Activated CD4-positive, alpha-beta memory T cell treated with anti-CD3 and anti-CD28 coated beads for 36 hours (primary cell): ENCODE measurements at regions of chr2 and their contacts with region 1.

Region 1: GRCh38 chr2:36858551-36859365 is 107.6 kb downstream of the STRN start:
- DNase-seq: no peak
- H3K4me3 Mint-ChIP-seq: no peak overlapping the region
- H3K27ac Mint-ChIP-seq: peak overlapping the region; percentile 39
- H3K4me1 Mint-ChIP-seq: peaks cover 19% of the 10 kb centered on the region
- H3K27me3 Mint-ChIP-seq: no peaks in the 10 kb centered on the region

Region 2: DNA sequence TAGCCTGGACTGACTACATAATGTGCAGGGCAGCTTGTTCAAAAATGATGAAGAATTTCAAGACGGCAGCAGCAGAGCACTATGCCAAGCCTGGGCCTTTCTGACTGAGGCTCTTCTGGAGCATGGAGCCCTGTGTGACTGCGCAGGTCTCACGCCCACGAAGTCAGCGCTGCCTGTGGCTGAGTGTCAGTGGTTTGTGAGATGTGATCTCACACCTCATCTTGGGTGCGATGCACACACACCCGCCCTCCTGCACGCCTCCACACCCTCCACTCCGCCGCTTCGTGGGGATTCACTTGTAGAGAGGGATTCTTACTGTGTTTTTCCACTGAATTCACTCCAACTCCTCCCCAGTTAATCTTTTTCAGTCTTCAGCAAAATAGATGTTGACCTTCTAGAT is 58.4 kb before region 1 on chr2:
- CTCF ChIA-PET with region 1: no interaction called
- POLR2A ChIA-PET with region 1: no interaction called
- intact Hi-C with region 1: loop called (anchors 2 kb)
- DNase-seq: peak; percentile 87
- H3K4me3 Mint-ChIP-seq: peak overlapping the region; percentile 9
- H3K27ac Mint-ChIP-seq: peak overlapping the region; percentile 53
- H3K4me1 Mint-ChIP-seq: peaks cover 11% of the 10 kb centered on the region
- H3K27me3 Mint-ChIP-seq: peaks cover 33% of the 10 kb centered on the region

Region 3: DNA sequence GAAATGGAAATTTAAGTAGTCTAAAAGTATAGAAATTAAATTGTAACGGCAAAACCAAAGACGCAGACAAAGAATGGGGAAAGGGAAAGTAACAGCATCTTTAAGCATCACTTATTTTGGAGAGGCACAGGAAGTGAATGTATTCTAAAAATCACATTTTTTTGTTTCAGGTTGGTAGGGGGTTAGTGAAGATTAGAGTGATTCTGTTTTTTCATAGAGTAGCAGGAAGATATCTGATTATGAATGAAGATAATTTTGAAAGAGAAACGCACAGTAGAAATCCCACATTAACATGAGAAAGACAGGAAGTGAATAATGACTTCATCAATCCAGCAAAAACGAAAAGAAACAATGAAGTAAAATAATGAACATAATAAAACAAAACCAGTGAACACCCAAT is 23.6 kb before region 1 on chr2:
- CTCF ChIA-PET with region 1: no interaction called
- POLR2A ChIA-PET with region 1: no interaction called
- intact Hi-C with region 1: loop called (anchors 2 kb)
- DNase-seq: no peak
- H3K4me3 Mint-ChIP-seq: no peak overlapping the region
- H3K27ac Mint-ChIP-seq: peak overlapping the region; percentile 3
- H3K4me1 Mint-ChIP-seq: peaks cover 11% of the 10 kb centered on the region
- H3K27me3 Mint-ChIP-seq: peaks cover 15% of the 10 kb centered on the region

Region 4: DNA sequence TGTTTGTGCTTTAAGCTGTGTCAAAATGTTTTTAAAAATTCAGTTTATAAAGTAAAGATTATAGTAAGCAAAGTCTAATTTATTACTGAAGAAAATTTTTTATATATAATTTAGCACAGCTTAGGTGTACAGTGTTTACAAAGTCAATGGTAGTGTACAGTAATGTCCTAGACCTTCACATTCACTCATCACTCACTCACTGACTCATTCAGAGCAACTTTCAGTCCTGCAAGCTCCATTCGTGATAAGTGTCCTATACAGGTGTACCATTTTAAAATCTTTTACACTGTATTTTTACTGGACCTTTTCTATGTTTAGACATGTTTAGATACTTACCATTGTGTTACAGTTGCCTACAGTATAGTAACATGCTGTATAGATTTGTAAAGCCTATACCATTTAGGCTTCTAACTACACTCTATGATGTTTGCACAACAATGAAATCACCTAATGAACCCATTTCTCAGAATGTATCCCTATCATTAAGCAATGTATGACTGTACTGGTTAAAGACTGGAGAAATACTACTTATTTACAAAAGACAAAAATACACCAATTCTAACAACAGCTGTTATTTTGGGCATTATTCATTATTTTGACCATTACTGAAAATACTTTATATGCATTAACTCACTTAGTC is 12.4 kb after region 1 on chr2:
- CTCF ChIA-PET with region 1: no interaction called
- POLR2A ChIA-PET with region 1: no interaction called
- intact Hi-C with region 1: loop called (anchors 1 kb)
- DNase-seq: no peak
- H3K4me3 Mint-ChIP-seq: no peak overlapping the region
- H3K27ac Mint-ChIP-seq: no peak overlapping the region
- H3K4me1 Mint-ChIP-seq: peaks cover 4% of the 10 kb centered on the region
- H3K27me3 Mint-ChIP-seq: no peaks in the 10 kb centered on the region

Region 5: DNA sequence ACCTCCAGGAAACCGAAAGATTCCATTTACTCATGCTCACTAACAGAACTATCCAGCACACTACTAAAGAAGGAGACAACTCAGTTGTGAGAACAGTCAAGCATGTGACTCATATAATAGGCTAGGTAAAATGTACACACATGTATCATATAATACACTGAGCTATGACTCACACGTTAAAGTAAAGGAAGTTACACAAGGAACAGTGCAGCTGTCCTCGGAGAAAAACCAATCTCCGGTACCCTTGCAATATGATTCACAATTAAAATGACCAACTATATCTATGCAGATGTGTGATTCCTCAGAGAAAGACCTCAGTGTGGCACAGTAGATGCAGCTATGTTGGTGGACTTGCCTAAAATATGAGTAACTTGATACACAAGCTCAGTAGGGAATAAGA is 31.0 kb after region 1 on chr2:
- CTCF ChIA-PET with region 1: no interaction called
- POLR2A ChIA-PET with region 1: no interaction called
- intact Hi-C with region 1: loop called (anchors 1 kb)
- DNase-seq: peak; percentile 24
- H3K4me3 Mint-ChIP-seq: peak overlapping the region; percentile 17
- H3K27ac Mint-ChIP-seq: peak overlapping the region; percentile 69
- H3K4me1 Mint-ChIP-seq: peaks cover 9% of the 10 kb centered on the region
- H3K27me3 Mint-ChIP-seq: no peaks in the 10 kb centered on the region

Region 6: DNA sequence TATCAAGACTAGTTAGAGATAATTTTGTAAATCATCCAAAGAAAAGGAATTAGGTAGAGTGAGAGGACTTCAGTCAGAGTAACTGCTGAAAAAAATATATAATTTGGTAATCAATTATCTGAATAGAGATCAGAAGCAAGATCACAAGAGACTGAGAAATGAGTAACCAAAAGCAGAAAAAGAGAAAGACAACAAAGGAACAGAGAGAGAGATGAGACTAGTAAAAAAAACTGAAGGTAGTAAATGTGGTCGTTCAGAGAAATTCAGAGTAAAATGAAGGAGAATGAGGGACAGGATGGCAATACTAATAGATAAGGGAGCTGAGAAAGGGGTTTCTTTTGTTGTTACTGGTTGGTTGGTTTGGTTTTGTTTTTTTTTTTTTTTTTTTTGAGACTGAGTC is 91.1 kb after region 1 on chr2:
- CTCF ChIA-PET with region 1: no interaction called
- POLR2A ChIA-PET with region 1: no interaction called
- intact Hi-C with region 1: loop called (anchors 1 kb)
- DNase-seq: no peak
- H3K4me3 Mint-ChIP-seq: no peak overlapping the region
- H3K27ac Mint-ChIP-seq: no peak overlapping the region
- H3K4me1 Mint-ChIP-seq: peaks cover 29% of the 10 kb centered on the region
- H3K27me3 Mint-ChIP-seq: no peaks in the 10 kb centered on the region